ENCODE measurements at regions of chr16 and their contacts with region 1.

Region 1: GRCh38 chr16:648781-649589 is at the start of gene WDR90:
- DNase-seq: peak; percentile 95
- ATAC-seq: peak; percentile 85
- H3K4me3 Mint-ChIP-seq: peak within 1 kb of the TSS; percentile 86
- H3K27ac Mint-ChIP-seq: peak within 1 kb of the TSS; percentile 79
- H3K4me1 Mint-ChIP-seq: peaks cover 18% of the 10 kb centered on the region
- H3K27me3 Mint-ChIP-seq: no peaks in the 10 kb centered on the region
- CTCF ChIP-seq: no peak
- total RNA-seq, gene WDR90: 89.6 to 90.7 TPM

Region 2: DNA sequence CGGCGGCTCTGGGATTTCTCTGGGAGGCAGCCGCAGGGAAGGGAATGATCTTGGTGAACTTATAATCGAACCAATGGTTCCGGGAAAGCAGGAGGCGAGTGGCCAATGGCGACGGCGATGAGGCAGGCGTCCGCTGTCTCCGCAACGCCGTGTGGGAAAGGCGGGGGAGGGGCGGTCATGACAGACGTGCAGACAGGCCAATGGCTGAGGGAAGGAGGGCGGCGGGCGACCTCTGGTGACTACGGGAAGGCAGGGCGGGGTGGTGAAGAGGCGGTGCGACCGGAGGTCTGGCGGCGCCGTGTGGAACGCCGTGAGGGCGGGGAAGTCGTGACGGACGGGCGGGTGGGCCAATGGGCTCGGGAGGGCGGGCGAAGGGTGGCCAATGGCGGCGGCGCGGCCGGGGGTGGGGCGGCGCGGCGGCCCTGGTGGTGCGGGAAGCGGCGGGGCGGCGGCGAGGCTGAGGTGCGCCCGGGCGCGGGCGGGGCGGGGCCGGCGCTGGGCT is 59.3 kb before region 1 on chr16 and contains the start of gene RAB40C:
- CTCF ChIA-PET with region 1: no interaction called
- POLR2A ChIA-PET with region 1: no interaction called
- intact Hi-C with region 1: no loop called
- DNase-seq: peak; percentile 99
- ATAC-seq: peak; percentile 89
- H3K4me3 Mint-ChIP-seq: peak within 1 kb of the TSS; percentile 83
- H3K27ac Mint-ChIP-seq: peak within 1 kb of the TSS; percentile 97
- H3K4me1 Mint-ChIP-seq: peaks cover 22% of the 10 kb centered on the region
- H3K27me3 Mint-ChIP-seq: no peaks in the 10 kb centered on the region
- CTCF ChIP-seq: no peak
- total RNA-seq, gene RAB40C: 8.1 to 8.8 TPM

Region 3: DNA sequence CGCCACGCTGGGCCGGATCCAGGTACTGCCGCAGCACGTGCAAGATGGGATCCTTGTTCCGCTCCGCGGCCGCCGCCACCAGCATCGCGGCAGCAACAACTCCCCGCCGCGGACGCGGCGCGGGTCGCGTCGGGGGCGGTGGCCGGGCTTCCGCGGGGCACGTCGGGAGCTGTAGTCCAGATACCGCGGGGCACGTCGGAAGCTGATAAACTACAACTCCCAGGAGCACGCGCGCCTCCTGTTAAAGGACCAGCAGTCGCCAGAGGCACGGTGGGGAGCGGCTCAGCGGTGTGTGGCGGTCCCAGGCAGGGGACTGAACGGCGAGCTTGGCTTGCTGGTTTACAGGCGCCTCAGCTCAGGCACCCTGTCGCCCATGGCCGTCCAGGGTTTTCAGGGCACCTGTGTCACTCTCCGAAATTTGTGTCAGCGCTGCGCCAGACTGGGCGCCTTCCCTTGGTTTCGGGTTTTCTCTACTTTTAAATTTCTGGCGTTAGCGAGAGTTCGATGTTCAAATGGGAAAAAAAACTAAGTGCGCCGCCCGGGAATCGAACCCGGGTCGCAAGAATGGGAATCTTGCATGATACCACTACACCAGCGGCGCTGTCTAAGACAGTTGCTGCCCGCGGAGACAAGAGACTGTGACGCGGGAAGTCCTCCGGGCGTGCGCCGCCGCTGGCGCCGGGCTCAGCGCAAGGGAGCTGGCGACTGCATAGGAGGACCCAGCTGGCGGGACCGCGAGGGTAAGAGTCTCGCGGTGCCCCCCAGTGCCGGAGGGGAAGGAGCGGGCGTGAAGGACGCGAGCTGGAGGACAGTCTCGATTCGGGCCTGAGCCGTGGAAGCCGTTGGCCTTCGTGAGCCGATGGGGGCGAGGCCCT is 12.5 kb before region 1 on chr16 and contains the start of gene METTL26:
- CTCF ChIA-PET with region 1: interaction called, 13 read pairs
- POLR2A ChIA-PET with region 1: interaction called, 21 read pairs
- intact Hi-C with region 1: no loop called
- DNase-seq: peak; percentile 98
- ATAC-seq: peak; percentile 86
- H3K4me3 Mint-ChIP-seq: peak within 1 kb of the TSS; percentile 89
- H3K27ac Mint-ChIP-seq: peak within 1 kb of the TSS; percentile 92
- H3K4me1 Mint-ChIP-seq: peaks cover 13% of the 10 kb centered on the region
- H3K27me3 Mint-ChIP-seq: no peaks in the 10 kb centered on the region
- CTCF ChIP-seq: no peak
- total RNA-seq, gene METTL26: 119 to 133 TPM

Region 4: GRCh38 chr16:660459-661183 is 11.6 kb after region 1 on chr16:
- CTCF ChIA-PET with region 1: interaction called, 5 read pairs
- POLR2A ChIA-PET with region 1: interaction called, 28 read pairs
- intact Hi-C with region 1: no loop called
- DNase-seq: peak; percentile 75
- ATAC-seq: peak; percentile 89
- H3K4me3 Mint-ChIP-seq: no peak overlapping the region
- H3K27ac Mint-ChIP-seq: no peak overlapping the region
- H3K4me1 Mint-ChIP-seq: peaks cover 7% of the 10 kb centered on the region
- H3K27me3 Mint-ChIP-seq: no peaks in the 10 kb centered on the region
- CTCF ChIP-seq: peak; percentile 42

Region 5: GRCh38 chr16:667780-668518 is 19.0 kb after region 1 on chr16 and contains the start of gene RHOT2:
- CTCF ChIA-PET with region 1: interaction called, 3 read pairs
- POLR2A ChIA-PET with region 1: interaction called, 28 read pairs
- intact Hi-C with region 1: no loop called
- DNase-seq: peak; percentile 95
- ATAC-seq: peak; percentile 98
- H3K4me3 Mint-ChIP-seq: peak within 1 kb of the TSS; percentile 75
- H3K27ac Mint-ChIP-seq: peak within 1 kb of the TSS; percentile 84
- H3K4me1 Mint-ChIP-seq: peaks cover 9% of the 10 kb centered on the region
- H3K27me3 Mint-ChIP-seq: no peaks in the 10 kb centered on the region
- CTCF ChIP-seq: peak; percentile 75
- total RNA-seq, gene RHOT2: 110 TPM